Activated CD4-positive, alpha-beta T cell treated with anti-CD3 and anti-CD28 coated beads, Interleukin-2, amount 10 ng/mL, durations not matched to agents 24 days and 14 days (primary cell): ENCODE measurements at regions of chr2 and their contacts with region 1.

Region 1: GRCh38 chr2:242088471-242089212 is 219.1 kb downstream of the RTP5 start:
- DNase-seq: peak; percentile 99
- H3K4me3 Mint-ChIP-seq: peak overlapping the region; percentile 93
- H3K27ac Mint-ChIP-seq: peak overlapping the region; percentile 89
- H3K4me1 Mint-ChIP-seq: peaks cover 28% of the 10 kb centered on the region
- H3K27me3 Mint-ChIP-seq: peaks cover 13% of the 10 kb centered on the region

Region 2: DNA sequence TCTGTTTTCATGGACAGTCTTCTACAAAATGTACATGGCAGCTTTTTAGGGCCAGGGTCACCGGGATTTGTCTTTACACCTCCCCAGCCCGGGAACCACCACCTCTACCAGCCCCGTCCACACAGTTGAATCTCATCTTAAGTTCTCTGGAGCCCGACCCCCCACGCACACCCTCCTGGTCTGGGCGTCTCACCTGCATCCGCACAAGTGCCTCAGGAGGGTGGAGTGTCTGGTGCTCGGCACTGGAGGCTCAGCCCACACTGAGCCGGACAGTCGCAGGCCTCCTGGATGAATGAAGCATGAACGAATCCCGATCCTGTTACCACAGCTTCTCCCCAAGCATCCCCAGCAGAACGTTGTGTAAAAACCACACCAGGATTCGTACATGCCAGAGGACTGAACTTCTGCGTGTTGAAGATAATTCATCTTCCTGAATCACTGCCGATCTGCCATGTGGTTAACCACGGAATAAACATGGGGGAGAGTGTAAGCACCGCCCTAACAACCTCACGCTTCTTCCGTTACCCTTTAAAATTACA is 57.1 kb before region 1 on chr2:
- intact Hi-C with region 1: loop called (anchors 5 kb)
- DNase-seq: peak; percentile 88
- H3K4me3 Mint-ChIP-seq: peak overlapping the region; percentile 88
- H3K27ac Mint-ChIP-seq: peak overlapping the region; percentile 35
- H3K4me1 Mint-ChIP-seq: peaks cover 18% of the 10 kb centered on the region
- H3K27me3 Mint-ChIP-seq: peaks cover 42% of the 10 kb centered on the region